ENCODE measurements at regions of chr14 and their contacts with region 1.

Region 1: GRCh38 chr14:44912041-44912869 is 49.5 kb downstream of the KLHL28 start:
- DNase-seq: no peak
- H3K4me3 ChIP-seq: no peak overlapping the region
- H3K27ac ChIP-seq: no peak overlapping the region
- H3K4me1 ChIP-seq: no peaks in the 10 kb centered on the region
- H3K27me3 ChIP-seq: no peaks in the 10 kb centered on the region
- CTCF ChIP-seq: no peak

Region 2: GRCh38 chr14:44626423-44626822 is 285.8 kb before region 1 on chr14:
- CTCF ChIA-PET with region 1: no interaction called
- POLR2A ChIA-PET with region 1: no interaction called
- intact Hi-C with region 1: no loop called
- DNase-seq: no peak
- H3K4me3 ChIP-seq: no peak overlapping the region
- H3K27ac ChIP-seq: no peak overlapping the region
- H3K4me1 ChIP-seq: no peaks in the 10 kb centered on the region
- H3K27me3 ChIP-seq: no peaks in the 10 kb centered on the region
- CTCF ChIP-seq: no peak

Region 3: DNA sequence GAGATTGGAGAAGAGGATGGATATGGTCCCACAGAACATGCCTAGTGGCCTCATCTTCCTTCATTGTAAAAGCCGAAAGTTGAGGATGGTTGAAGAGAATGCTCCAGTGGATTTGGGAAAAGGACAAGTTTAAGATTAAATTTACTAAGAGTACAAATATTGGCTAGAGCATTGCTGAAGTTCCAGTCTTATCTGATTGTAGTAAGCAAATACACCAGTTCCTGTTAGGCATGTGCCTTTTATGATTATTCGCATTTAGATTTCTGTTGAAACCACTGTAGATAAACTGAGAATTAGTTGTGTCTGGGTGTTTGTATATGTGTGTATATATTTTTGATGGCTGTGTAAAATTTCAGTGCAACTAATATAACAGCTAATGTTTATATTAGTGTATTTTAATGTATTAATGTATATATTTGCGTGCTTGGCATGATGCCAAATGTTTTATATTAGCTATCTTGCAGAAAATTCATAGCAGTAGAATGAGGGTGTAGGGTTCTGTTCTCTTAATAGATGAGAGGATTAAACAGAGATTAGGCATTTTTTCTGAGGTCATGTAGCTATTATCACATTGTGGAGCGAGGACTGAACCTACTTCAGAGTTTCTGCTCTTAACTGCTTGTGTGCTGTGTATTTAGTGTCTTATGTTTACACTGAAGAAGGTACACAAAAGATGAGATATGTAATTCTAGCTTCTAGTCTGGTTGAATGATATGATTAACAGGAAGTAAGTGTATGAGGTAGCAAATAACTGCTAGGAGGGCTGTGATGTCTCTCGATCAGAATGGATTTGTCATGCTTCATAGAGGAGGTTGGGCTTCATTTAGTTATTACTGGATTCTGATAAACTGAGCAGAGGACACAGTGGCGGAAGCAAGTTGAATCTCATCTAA is 200.9 kb after region 1 on chr14:
- CTCF ChIA-PET with region 1: no interaction called
- POLR2A ChIA-PET with region 1: no interaction called
- intact Hi-C with region 1: no loop called
- DNase-seq: peak; percentile 18
- H3K4me3 ChIP-seq: no peak overlapping the region
- H3K27ac ChIP-seq: peak overlapping the region; percentile 71
- H3K4me1 ChIP-seq: peaks cover 21% of the 10 kb centered on the region
- H3K27me3 ChIP-seq: no peaks in the 10 kb centered on the region
- CTCF ChIP-seq: no peak

Region 4: GRCh38 chr14:45134051-45134958 is 222.1 kb after region 1 on chr14 and contains the start of gene FKBP3:
- CTCF ChIA-PET with region 1: no interaction called
- POLR2A ChIA-PET with region 1: no interaction called
- intact Hi-C with region 1: loop called (anchors 5 kb)
- DNase-seq: peak; percentile 99
- H3K4me3 ChIP-seq: peak within 1 kb of the TSS; percentile 83
- H3K27ac ChIP-seq: peak within 1 kb of the TSS; percentile 92
- H3K4me1 ChIP-seq: peaks cover 17% of the 10 kb centered on the region
- H3K27me3 ChIP-seq: no peaks in the 10 kb centered on the region
- CTCF ChIP-seq: peak; percentile 47
- total RNA-seq, gene FKBP3: 162 and 164 TPM in 2 replicates

Region 5: GRCh38 chr14:45267071-45267470 is 354.8 kb after region 1 on chr14:
- CTCF ChIA-PET with region 1: interaction called, 18 read pairs
- POLR2A ChIA-PET with region 1: no interaction called
- intact Hi-C with region 1: loop called (anchors 1 kb)
- DNase-seq: no peak
- H3K4me3 ChIP-seq: no peak overlapping the region
- H3K27ac ChIP-seq: no peak overlapping the region
- H3K4me1 ChIP-seq: no peaks in the 10 kb centered on the region
- H3K27me3 ChIP-seq: no peaks in the 10 kb centered on the region
- CTCF ChIP-seq: no peak

Region 6: DNA sequence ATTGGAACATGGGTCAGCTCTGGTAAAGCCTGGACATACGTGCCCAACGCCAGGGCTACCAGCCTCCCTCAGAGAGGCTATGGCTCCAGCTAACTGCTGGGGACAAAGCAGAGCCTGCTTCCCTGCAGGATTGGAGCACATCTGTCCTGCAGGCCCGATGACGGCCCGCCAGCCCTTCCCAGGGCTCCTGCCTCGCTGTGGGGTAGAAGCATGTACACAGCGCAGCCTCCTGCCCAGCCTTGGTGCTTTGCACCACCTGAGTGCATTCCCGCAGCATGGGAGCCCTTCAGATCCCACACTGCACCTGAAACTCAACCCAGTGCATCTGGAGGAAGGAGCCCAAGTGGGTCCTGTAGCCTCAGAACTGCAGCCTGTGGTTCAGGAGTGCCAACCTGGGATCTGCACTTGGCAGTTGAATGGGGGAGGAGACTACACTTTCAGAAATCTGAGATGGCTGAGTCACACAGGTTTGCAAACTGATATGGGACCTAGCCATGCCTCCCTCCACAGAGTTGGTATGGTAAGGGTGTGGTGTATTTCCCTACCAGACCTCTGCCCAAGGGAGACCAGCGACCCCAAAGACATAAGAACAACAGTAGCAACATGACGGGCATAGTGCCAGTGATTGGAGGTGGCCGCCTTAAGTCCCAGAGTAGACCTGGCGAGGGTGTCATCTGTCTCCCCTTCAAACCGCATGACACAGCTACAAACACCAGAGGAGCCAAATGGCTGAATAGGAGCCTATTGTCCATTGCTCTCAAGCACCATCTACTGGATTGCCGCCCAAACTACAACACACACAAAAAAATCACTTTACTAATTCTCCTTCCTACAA is 614.7 kb after region 1 on chr14:
- CTCF ChIA-PET with region 1: no interaction called
- POLR2A ChIA-PET with region 1: no interaction called
- intact Hi-C with region 1: loop called (anchors 10 kb)
- DNase-seq: peak; percentile 67
- H3K4me3 ChIP-seq: no peak overlapping the region
- H3K27ac ChIP-seq: no peak overlapping the region
- H3K4me1 ChIP-seq: no peaks in the 10 kb centered on the region
- H3K27me3 ChIP-seq: no peaks in the 10 kb centered on the region
- CTCF ChIP-seq: peak; percentile 77

Region 7: DNA sequence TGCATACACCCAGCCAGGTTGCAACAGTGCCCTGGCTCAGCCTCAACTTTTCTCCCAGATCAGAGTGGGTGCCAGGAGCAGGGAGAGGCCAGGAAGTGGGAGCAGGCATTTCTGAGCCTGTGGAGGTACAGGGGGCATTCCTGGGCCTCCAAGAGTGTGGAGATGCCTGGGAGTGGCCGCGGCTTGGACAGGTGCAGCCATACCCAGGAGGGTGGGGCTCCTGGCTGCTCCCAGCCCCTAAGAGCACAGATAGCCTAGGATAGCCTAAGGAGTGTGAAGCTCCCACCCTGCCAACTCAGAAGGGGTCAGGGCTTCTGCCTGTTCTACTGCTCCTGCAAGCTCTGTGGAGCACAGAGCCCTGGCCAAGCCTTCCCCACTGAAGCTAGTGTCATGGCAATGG is 1196.0 kb after region 1 on chr14:
- CTCF ChIA-PET with region 1: no interaction called
- POLR2A ChIA-PET with region 1: no interaction called
- intact Hi-C with region 1: no loop called
- DNase-seq: no peak
- H3K4me3 ChIP-seq: no peak overlapping the region
- H3K27ac ChIP-seq: no peak overlapping the region
- H3K4me1 ChIP-seq: no peaks in the 10 kb centered on the region
- H3K27me3 ChIP-seq: no peaks in the 10 kb centered on the region
- CTCF ChIP-seq: no peak

Measured in A673 (cell line).